Adrenal gland (tissue), 19 donors: ENCODE measurements at regions of chr14 and their contacts with region 1.

Region 1: GRCh38 chr14:100709289-100710284 is 17.1 kb upstream of the DLK1 start:
- DNase-seq: peak in 4 of 7 donors; percentile 48 to 73 (median 60)
- H3K4me3 ChIP-seq: peak overlapping the region in 1 of 4 donors; percentile 19
- H3K27ac ChIP-seq: peak overlapping the region; percentile 92 to 97 (median 95)
- H3K4me1 ChIP-seq: peaks cover 31 to 54% of the 10 kb centered on the region in 2 donors
- H3K27me3 ChIP-seq: no peaks in the 10 kb centered on the region
- CTCF ChIP-seq: peak; percentile 8 to 63 (median 45)
- POLR2A ChIP-seq: no peak

Region 2: DNA sequence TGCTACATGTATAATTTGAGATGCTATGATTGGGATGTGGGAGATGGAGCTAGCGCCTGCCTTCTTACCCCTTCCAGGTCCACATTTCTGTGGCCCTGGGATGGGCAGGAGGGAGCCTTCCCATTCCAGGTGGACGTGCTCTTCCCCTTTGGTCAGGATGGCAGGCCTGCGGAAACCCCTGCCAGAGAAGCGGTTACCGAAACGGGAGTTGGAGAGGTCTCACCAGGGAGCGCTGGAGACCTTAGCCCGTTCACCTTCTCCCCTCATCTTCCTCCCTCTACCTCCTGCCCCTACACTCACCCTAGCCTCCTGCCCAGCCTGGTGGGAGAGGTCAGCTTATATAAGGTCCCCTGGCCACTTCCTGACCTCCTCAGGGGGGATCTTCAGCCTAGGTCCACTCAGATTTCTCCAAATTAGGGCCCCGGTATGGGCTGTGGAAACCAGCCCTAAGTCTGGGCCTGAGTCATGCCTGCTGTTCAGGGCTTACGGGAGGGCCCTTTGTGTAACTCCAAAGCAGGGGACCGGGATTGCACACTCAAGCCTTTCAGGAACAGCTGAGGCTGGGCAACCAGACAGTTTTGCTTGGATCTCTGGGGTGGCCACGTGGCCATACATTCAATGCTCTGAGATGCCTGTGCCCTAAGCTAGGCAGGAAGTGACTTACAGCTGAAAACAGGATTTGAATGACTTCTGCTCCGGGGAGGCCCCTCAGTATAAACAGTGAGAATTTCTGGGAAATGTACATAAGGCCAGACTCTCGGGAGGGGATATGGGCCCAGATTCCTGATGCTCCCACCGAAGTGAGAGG is 106.1 kb after region 1 on chr14:
- intact Hi-C with region 1: loop called in 1 of 2 experiments (anchors 10 kb)
- DNase-seq: no peak
- H3K4me3 ChIP-seq: no peak overlapping the region
- H3K27ac ChIP-seq: no peak overlapping the region
- H3K4me1 ChIP-seq: no peaks in the 10 kb centered on the region
- H3K27me3 ChIP-seq: no peaks in the 10 kb centered on the region
- CTCF ChIP-seq: no peak
- POLR2A ChIP-seq: no peak